ENCODE measurements at regions of chr16 and their contacts with region 1.

Region 1: DNA sequence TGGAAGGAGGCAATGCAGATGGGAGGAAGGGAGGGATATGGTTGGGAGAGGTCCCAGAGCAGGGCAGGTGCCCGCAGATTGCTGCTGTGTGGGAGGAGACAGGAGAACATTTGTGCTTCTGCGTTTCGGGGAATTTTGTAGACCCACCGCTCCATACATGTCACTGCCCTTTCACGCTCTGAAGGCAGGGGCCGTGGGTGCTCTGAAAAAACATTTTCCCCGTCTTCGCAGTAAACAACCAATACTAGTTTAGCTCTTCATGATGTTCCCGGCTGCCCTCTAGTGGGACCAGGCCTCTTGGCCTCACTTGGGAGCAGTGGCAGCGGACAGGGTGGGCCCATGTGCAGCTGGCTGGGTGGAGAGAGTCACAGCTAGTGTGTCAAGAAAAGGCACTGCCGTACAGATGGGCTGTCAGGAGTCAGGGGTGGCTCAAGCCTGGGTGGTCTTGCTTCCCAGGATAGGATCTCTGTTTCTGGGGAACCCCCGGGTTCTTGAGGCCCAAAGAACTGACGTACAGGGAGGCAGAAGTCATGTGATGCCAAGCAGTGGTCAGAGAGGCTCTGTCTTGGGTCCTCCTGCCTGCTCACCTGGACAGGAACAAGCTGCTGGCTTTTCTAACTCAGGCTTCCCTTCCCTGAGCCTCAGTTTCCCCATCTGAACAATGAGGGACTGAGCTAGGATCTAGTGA is 46.5 kb upstream of the CPNE2 start:
- DNase-seq: no peak
- H3K4me3 ChIP-seq: no peak overlapping the region
- H3K27ac ChIP-seq: no peak overlapping the region
- H3K4me1 ChIP-seq: peaks cover 10% of the 10 kb centered on the region
- H3K27me3 ChIP-seq: no peaks in the 10 kb centered on the region
- CTCF ChIP-seq: peak; percentile 28 to 71

Region 2: GRCh38 chr16:56964243-56965148 is 81.3 kb before region 1 on chr16:
- CTCF ChIA-PET with region 1: interaction called, 3 read pairs
- dilution Hi-C with region 1: no loop called
- in situ Hi-C with region 1: no loop called
- intact Hi-C with region 1: loop called (anchors 2 kb)
- DNase-seq: peak; percentile 60
- H3K4me3 ChIP-seq: no peak overlapping the region
- H3K27ac ChIP-seq: no peak overlapping the region
- H3K4me1 ChIP-seq: peaks cover 3% of the 10 kb centered on the region
- H3K27me3 ChIP-seq: no peaks in the 10 kb centered on the region
- CTCF ChIP-seq: peak; percentile 76 to 77